Activated CD8-positive, alpha-beta memory T cell treated with anti-CD3 and anti-CD28 coated beads, Interleukin-2, amount 10 ng/mL, durations not matched to agents 7 days and 5 days (primary cell): ENCODE measurements at regions of chr10 and their contacts with region 1.

Region 1: GRCh38 chr10:28381903-28382347 is 79.1 kb upstream of the MPP7 start:
- DNase-seq: peak; percentile 89
- ATAC-seq: peak; percentile 93
- H3K4me3 Mint-ChIP-seq: no peak overlapping the region
- H3K27ac Mint-ChIP-seq: no peak overlapping the region
- H3K4me1 Mint-ChIP-seq: peaks cover 20% of the 10 kb centered on the region
- H3K27me3 Mint-ChIP-seq: peaks cover 18% of the 10 kb centered on the region

Region 2: GRCh38 chr10:28241741-28242399 is 140.1 kb before region 1 on chr10:
- CTCF ChIA-PET with region 1: interaction called, 17 read pairs
- DNase-seq: peak; percentile 50
- ATAC-seq: peak; percentile 63
- H3K4me3 Mint-ChIP-seq: no peak overlapping the region
- H3K27ac Mint-ChIP-seq: no peak overlapping the region
- H3K4me1 Mint-ChIP-seq: peaks cover 3% of the 10 kb centered on the region
- H3K27me3 Mint-ChIP-seq: no peaks in the 10 kb centered on the region

Region 3: DNA sequence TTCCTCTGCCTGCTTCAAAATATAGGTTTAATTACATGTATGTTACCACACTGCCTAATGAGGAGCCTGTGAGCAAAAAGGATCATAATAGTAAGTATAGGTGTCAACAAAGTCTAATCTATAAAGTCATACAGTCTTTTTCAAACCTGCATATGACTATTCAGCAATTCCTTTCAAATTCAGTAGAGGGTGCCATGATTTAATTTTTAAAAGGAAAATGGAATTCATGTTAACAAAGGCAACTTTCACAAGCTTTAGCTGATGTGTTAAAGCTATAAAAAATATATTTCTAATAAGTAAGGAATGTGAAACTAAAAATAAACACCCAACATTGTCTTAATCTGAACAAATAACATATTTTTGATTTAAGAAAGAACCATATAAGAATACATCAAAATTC is 131.1 kb before region 1 on chr10:
- CTCF ChIA-PET with region 1: interaction called, 54 read pairs
- DNase-seq: no peak
- ATAC-seq: no peak
- H3K4me3 Mint-ChIP-seq: no peak overlapping the region
- H3K27ac Mint-ChIP-seq: no peak overlapping the region
- H3K4me1 Mint-ChIP-seq: peaks cover 4% of the 10 kb centered on the region
- H3K27me3 Mint-ChIP-seq: no peaks in the 10 kb centered on the region

Region 4: GRCh38 chr10:28367929-28368484 is 13.9 kb before region 1 on chr10:
- CTCF ChIA-PET with region 1: interaction called, 37 read pairs
- DNase-seq: peak; percentile 82
- ATAC-seq: peak; percentile 98
- H3K4me3 Mint-ChIP-seq: peak overlapping the region; percentile 43
- H3K27ac Mint-ChIP-seq: peak overlapping the region; percentile 85
- H3K4me1 Mint-ChIP-seq: peaks cover 34% of the 10 kb centered on the region
- H3K27me3 Mint-ChIP-seq: peaks cover 8% of the 10 kb centered on the region

Region 5: GRCh38 chr10:28393966-28394568 is 12.1 kb after region 1 on chr10:
- CTCF ChIA-PET with region 1: interaction called, 32 read pairs
- DNase-seq: peak; percentile 67
- ATAC-seq: peak; percentile 81
- H3K4me3 Mint-ChIP-seq: no peak overlapping the region
- H3K27ac Mint-ChIP-seq: no peak overlapping the region
- H3K4me1 Mint-ChIP-seq: peaks cover 4% of the 10 kb centered on the region
- H3K27me3 Mint-ChIP-seq: no peaks in the 10 kb centered on the region

Region 6: DNA sequence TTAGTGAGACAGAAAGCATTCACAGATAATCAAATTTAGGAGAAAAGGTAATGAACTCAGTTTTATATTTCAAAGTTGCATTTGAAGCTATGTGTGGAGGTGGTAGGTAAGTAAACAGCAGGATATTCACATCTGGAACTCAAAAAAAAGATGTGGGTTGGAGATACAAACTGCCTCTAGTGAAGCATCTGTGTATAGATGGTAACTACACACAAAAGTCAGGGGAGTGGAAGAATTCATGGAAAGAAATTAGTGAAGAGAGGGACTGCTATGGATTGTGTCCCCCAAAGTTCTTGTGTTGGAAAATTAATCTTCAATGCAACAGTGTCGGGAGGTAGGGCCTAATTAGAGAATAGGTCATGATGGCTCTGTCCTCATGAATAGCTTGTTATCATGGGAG is 132.7 kb after region 1 on chr10:
- CTCF ChIA-PET with region 1: no interaction called
- DNase-seq: no peak
- ATAC-seq: no peak
- H3K4me3 Mint-ChIP-seq: no peak overlapping the region
- H3K27ac Mint-ChIP-seq: no peak overlapping the region
- H3K4me1 Mint-ChIP-seq: no peaks in the 10 kb centered on the region
- H3K27me3 Mint-ChIP-seq: peaks cover 16% of the 10 kb centered on the region